T-cell (primary cell): ENCODE measurements at regions of chr17 and their contacts with region 1.

Region 1: DNA sequence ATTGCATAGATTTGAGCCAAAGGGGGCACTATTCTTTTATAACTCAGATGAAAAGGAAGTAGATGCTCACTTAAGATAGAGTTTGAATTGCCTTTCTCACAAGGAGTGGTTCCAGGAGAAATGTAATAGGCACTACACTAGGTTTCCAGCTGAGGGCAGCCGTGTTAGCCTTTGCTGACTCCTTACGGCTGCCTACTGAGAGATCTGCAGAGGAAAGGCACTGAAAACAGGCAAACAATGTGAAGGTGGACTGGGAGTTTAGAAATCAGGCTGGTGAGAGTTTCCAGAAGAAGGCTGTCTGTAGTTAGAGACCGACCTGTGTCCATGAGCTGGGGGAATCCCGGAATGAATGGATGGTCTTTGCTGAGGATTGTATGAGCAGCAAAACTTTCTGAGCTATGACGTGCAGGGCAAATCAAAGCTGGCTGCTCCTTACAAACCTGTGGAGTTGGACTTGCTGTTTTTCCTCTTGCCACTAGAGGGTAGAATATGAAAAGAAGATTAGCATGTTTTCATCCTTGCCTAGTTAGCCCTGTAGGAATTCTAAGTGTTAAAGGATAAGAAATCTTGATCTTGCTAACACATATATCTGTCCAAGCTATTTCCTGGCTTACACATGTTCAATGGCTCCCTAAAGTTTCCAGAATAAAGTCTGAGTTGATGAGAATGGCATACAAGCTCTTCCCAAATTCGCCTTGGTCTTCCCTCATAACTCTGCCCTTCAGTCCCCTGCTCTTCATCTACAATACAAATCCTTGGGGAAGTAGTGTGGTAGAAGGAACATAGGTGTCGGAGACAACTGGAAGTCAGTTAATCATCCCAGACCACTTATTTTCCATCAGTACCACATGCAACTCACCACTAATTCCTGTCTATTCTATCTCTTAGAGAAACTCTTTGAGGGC is 20.1 kb upstream of the TAOK1 start:
- DNase-seq: peak; percentile 22 to 76 (median 46)
- ATAC-seq: peak; percentile 95 to 98 (median 97)
- H3K4me3 ChIP-seq: no peak overlapping the region
- H3K4me3 Mint-ChIP-seq: no peak overlapping the region
- H3K27ac ChIP-seq: peak overlapping the region; percentile 54
- H3K27ac Mint-ChIP-seq: no peak overlapping the region
- H3K4me1 ChIP-seq: peaks cover 0 to 6% of the 10 kb centered on the region in 2 experiments
- H3K4me1 Mint-ChIP-seq: no peaks in the 10 kb centered on the region
- H3K27me3 ChIP-seq: no peaks in the 10 kb centered on the region
- H3K27me3 Mint-ChIP-seq: no peaks in the 10 kb centered on the region

Region 2: DNA sequence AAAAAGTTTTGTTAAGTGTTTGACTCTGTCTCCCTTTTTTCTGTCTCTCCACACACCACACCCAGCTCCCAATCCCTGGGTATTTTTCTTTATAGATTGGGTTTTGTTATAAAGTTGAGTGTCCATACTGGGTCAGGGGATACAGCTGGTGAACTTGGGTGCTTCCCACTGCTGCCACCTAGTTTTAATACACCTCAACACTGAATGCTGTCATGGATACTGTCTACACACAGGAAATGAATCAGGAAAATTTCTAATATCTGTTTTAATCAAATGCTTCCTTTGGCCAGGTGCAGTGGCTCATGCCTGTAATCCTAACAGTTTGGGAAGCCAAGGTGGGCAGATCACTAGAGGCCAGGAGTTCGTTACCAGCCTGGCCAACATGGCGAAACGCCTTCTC is 14.8 kb after region 1 on chr17:
- CTCF ChIA-PET with region 1: interaction called, 9 to 18 read pairs
- POLR2A ChIA-PET with region 1: no interaction called
- DNase-seq: no peak
- ATAC-seq: no peak
- H3K4me3 ChIP-seq: no peak overlapping the region
- H3K4me3 Mint-ChIP-seq: no peak overlapping the region
- H3K27ac ChIP-seq: no peak overlapping the region
- H3K27ac Mint-ChIP-seq: no peak overlapping the region
- H3K4me1 ChIP-seq: peaks cover 3 to 5% of the 10 kb centered on the region in 2 experiments
- H3K4me1 Mint-ChIP-seq: peaks cover 5 to 7% (median 6%) of the 10 kb centered on the region in 3 donors
- H3K27me3 ChIP-seq: no peaks in the 10 kb centered on the region
- H3K27me3 Mint-ChIP-seq: no peaks in the 10 kb centered on the region

Region 3: GRCh38 chr17:29401258-29401657 is 31.2 kb after region 1 on chr17:
- CTCF ChIA-PET with region 1: no interaction called
- POLR2A ChIA-PET with region 1: no interaction called
- DNase-seq: no peak
- ATAC-seq: no peak
- H3K4me3 ChIP-seq: no peak overlapping the region
- H3K4me3 Mint-ChIP-seq: no peak overlapping the region
- H3K27ac ChIP-seq: no peak overlapping the region
- H3K27ac Mint-ChIP-seq: no peak overlapping the region
- H3K4me1 ChIP-seq: peaks cover 0 to 14% of the 10 kb centered on the region in 2 experiments
- H3K4me1 Mint-ChIP-seq: peaks cover 28 to 35% (median 28%) of the 10 kb centered on the region in 3 donors
- H3K27me3 ChIP-seq: no peaks in the 10 kb centered on the region
- H3K27me3 Mint-ChIP-seq: no peaks in the 10 kb centered on the region

Region 4: GRCh38 chr17:29495011-29495410 is 124.9 kb after region 1 on chr17:
- CTCF ChIA-PET with region 1: interaction called in 1 of 2 experiments, 11 read pairs
- POLR2A ChIA-PET with region 1: no interaction called
- DNase-seq: no peak
- ATAC-seq: no peak
- H3K4me3 ChIP-seq: no peak overlapping the region
- H3K4me3 Mint-ChIP-seq: no peak overlapping the region
- H3K27ac ChIP-seq: no peak overlapping the region
- H3K27ac Mint-ChIP-seq: no peak overlapping the region
- H3K4me1 ChIP-seq: no peaks in the 10 kb centered on the region
- H3K4me1 Mint-ChIP-seq: no peaks in the 10 kb centered on the region
- H3K27me3 ChIP-seq: no peaks in the 10 kb centered on the region
- H3K27me3 Mint-ChIP-seq: no peaks in the 10 kb centered on the region

Region 5: DNA sequence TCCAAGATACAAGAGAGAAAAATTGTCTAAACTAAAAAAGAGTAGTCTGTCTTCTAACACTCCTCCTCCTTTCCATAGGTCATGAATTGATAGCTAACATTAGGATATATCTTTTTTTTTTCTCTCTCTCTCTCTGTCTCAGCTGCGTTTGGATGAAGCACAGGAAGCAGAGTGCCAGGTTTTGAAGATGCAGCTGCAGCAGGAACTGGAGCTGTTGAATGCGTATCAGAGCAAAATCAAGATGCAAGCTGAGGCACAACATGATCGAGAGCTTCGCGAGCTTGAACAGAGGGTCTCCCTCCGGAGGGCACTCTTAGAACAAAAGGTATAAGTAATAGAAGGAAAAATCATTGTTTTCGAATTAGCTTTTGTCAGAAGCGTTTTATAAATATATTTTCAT is 163.9 kb after region 1 on chr17:
- CTCF ChIA-PET with region 1: interaction called, 4 to 22 read pairs
- POLR2A ChIA-PET with region 1: no interaction called
- DNase-seq: no peak
- ATAC-seq: no peak
- H3K4me3 ChIP-seq: no peak overlapping the region
- H3K4me3 Mint-ChIP-seq: no peak overlapping the region
- H3K27ac ChIP-seq: no peak overlapping the region
- H3K27ac Mint-ChIP-seq: no peak overlapping the region
- H3K4me1 ChIP-seq: no peaks in the 10 kb centered on the region
- H3K4me1 Mint-ChIP-seq: no peaks in the 10 kb centered on the region
- H3K27me3 ChIP-seq: no peaks in the 10 kb centered on the region
- H3K27me3 Mint-ChIP-seq: no peaks in the 10 kb centered on the region